ENCODE measurements at regions of chr19 and their contacts with region 1.

Region 1: DNA sequence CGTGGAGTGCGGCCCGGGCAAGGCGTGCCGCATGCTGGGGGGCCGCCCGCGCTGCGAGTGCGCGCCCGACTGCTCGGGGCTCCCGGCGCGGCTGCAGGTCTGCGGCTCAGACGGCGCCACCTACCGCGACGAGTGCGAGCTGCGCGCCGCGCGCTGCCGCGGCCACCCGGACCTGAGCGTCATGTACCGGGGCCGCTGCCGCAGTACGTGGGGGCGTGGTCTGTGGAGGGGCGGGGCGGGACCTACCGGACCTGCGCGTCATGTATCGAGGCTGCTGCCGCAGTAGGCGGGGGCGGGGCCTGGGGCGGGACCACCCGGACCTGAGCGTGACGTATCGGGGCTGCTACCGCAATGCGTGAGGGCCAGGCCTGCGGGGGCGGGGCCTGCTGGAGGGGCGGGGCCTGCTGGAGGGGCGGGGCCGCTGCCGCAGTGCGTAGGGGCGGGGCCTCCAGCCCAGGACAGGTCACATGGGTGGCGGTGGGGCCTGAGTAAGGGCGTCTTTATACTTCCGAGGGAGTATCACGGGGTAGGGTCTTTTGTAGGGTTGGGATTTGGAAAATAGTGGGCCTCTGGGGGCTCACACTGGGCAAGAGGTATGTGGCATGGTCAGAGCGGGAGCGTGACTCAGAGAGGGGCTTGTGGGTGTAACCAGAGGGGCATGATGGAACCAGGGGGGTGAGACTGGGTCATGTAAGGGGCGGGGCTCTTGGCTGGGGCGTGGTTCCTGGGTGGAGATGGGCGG is 4.3 kb downstream of the FSTL3 start:
- DNase-seq: peak; percentile 100
- ATAC-seq: peak; percentile 81
- H3K4me3 Mint-ChIP-seq: peak overlapping the region; percentile 70
- H3K27ac Mint-ChIP-seq: peak overlapping the region; percentile 94
- H3K4me1 Mint-ChIP-seq: peaks cover 3% of the 10 kb centered on the region
- H3K27me3 Mint-ChIP-seq: peaks cover 4% of the 10 kb centered on the region

Region 2: GRCh38 chr19:344625-345319 is 335.7 kb before region 1 on chr19 and contains the start of gene MIER2:
- CTCF ChIA-PET with region 1: no interaction called
- POLR2A ChIA-PET with region 1: no interaction called
- intact Hi-C with region 1: no loop called
- DNase-seq: peak; percentile 94
- ATAC-seq: peak; percentile 94
- H3K4me3 Mint-ChIP-seq: peak within 1 kb of the TSS; percentile 79
- H3K27ac Mint-ChIP-seq: peak within 1 kb of the TSS; percentile 77
- H3K4me1 Mint-ChIP-seq: peaks cover 44% of the 10 kb centered on the region
- H3K27me3 Mint-ChIP-seq: peaks cover 7% of the 10 kb centered on the region
- total RNA-seq, gene MIER2: 21.2 to 24.6 TPM

Region 3: GRCh38 chr19:488505-489417 is 191.7 kb before region 1 on chr19:
- CTCF ChIA-PET with region 1: no interaction called
- POLR2A ChIA-PET with region 1: no interaction called
- intact Hi-C with region 1: no loop called
- DNase-seq: peak; percentile 93
- ATAC-seq: peak; percentile 91
- H3K4me3 Mint-ChIP-seq: peak overlapping the region; percentile 71
- H3K27ac Mint-ChIP-seq: peak overlapping the region; percentile 75
- H3K4me1 Mint-ChIP-seq: peaks cover 2% of the 10 kb centered on the region
- H3K27me3 Mint-ChIP-seq: peaks cover 10% of the 10 kb centered on the region

Region 4: DNA sequence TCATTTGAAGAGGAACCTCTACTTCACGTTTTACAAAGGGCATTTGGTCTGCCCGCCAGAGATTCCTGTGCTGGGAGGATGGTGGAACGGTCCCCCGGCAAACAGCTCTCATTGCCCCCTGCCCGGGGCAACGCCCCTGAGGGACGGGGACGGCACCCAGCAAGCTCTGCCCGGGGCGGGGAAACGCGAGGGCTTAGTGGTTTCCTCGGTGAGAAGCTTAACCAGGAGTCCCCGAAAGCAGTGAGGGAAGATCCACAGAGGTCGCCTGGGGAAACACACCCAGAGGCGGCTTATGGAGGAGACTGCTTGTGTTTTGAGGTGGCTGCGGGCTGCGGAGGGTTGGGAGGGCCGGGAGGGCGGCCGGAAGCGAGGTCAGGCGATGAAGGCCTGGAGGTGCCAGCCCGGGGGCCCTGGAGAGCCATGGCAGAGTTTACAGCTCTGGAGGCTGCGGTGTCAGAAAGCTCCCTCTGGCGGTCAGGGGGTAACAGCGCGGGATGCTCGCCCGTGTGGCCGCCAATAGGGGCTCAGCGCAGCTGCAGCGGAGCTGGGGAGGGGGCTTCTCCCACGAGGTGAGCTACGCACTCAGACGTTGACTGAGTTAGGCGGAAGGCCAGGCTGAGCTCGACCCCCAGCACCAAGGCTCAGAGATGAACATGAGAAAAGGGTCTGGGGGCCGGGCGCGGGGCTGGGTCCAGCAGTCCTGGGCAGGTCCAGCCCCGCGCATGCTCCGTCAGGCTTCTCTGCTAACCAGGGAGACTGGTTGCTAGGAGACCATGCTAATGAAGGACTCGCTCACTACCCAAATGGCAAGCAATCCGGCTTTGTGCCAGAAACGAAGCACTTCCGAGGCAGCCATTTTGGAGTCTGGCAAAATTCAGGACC is 173.8 kb before region 1 on chr19:
- CTCF ChIA-PET with region 1: no interaction called
- POLR2A ChIA-PET with region 1: no interaction called
- intact Hi-C with region 1: loop called in 1 of 2 experiments (anchors 1 kb)
- DNase-seq: peak; percentile 97
- ATAC-seq: peak; percentile 72
- H3K4me3 Mint-ChIP-seq: peak overlapping the region; percentile 95
- H3K27ac Mint-ChIP-seq: peak overlapping the region; percentile 100
- H3K4me1 Mint-ChIP-seq: peaks cover 41% of the 10 kb centered on the region
- H3K27me3 Mint-ChIP-seq: no peaks in the 10 kb centered on the region

Region 5: DNA sequence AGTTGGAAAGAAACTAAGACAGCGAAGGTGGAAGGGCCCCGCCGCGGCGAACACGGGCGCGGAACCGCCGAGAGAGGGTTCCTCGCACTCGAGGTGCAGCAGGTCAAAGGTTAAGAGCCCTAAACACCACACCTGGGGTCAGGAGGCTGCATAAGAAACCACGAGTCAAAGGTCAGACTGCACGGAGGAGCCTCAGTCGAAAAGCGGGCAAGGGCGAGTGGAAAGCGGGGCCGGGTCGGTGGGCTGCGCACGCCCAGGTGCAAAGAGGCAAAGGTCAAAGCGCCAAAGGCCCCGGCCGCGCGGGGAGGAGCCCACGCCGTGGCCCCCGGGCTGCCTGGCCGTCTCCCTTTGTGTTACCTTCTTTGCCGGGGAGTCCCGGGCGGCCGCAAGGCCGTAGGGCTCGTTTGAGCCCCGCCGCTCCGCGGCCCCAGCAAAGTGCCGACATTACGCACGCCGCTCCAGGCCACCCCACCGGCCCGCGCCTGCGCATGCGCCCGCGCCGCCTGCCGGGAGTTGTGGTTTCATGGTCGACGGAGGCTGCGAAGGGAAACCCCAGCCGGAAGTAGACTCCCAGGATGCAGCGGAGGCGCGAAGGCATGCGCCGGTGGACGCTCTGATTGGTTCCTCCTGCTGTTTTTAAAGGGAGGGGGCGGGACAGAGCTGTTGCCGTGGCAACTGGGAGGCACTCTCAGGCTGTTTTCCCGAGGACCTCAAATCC is 47.2 kb before region 1 on chr19 and contains the start of gene POLRMT:
- CTCF ChIA-PET with region 1: interaction called, 3 read pairs
- POLR2A ChIA-PET with region 1: no interaction called
- intact Hi-C with region 1: loop called in 1 of 2 experiments (anchors 1 kb)
- DNase-seq: peak; percentile 98
- ATAC-seq: peak; percentile 98
- H3K4me3 Mint-ChIP-seq: peak within 1 kb of the TSS; percentile 97
- H3K27ac Mint-ChIP-seq: peak within 1 kb of the TSS; percentile 91
- H3K4me1 Mint-ChIP-seq: peaks cover 29% of the 10 kb centered on the region
- H3K27me3 Mint-ChIP-seq: no peaks in the 10 kb centered on the region
- total RNA-seq, gene POLRMT: 69.0 to 77.4 TPM

Region 6: DNA sequence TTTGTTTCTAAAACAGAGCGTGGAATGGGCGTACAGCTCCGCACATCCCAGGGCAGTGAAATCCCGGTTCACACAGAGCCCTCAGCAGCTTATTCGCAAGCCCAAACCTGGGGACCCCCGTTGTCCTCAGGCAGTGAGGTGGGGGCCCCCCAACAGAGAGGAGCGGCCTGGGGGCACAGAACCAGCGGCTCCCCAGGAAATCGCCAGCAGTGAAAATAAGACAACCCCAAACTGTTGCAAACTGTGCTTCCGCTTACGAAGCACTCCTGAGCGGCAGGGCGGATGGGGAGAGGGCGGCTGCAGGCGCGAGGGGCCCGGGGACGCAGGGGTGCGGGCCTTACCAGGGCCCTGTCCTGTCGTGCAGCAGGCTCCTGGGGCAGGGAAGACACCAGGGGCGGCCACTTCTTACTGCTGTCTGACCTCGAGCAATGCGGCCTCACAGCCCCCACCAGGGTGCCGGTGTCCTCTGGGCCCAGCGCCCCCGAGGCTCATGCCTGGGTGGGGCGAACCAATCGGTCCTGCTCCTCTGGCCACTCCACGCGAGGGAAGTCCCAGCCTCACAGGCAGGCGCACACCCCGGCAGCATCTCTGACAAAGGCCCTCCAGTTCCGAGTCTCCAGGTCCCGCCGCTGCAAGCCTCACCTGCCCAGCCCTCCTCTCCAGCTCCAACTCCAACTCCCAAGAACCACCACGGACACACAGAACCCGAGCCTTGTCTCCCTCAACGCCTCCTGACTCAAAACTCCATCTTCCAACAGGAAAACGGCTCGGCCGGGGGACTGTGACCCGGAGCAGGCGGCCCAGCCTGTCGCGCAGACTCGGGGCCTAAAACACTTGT is 34.6 kb before region 1 on chr19:
- CTCF ChIA-PET with region 1: no interaction called
- POLR2A ChIA-PET with region 1: no interaction called
- intact Hi-C with region 1: no loop called
- DNase-seq: no peak
- ATAC-seq: peak; percentile 11
- H3K4me3 Mint-ChIP-seq: no peak overlapping the region
- H3K27ac Mint-ChIP-seq: no peak overlapping the region
- H3K4me1 Mint-ChIP-seq: no peaks in the 10 kb centered on the region
- H3K27me3 Mint-ChIP-seq: no peaks in the 10 kb centered on the region

Region 7: DNA sequence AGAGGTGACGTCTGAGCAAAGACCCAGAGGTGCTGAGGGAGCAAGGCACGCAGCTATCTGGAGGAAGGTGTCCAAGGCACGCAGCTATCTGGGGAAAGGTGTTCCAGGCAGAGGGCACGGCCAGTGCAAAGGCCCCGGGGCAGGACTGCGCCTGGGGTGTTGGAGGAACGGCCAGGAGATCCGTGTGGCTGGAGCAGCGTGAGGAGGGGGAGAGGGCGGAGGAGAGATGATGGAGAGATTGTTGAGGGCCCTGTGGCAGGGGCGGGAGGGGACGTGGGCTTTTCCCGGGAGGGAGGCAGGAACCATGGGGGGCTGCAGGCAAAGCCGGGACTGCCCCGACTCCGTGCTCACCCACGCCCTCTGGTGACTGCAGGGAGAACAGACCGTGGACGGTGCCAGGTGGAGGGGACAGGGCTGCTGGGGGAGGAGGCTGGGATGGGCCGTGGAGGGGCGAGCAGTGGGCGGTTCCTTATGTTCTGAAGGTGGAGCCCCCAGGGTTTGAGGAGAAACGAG is 57.2 kb after region 1 on chr19:
- CTCF ChIA-PET with region 1: interaction called, 3 read pairs
- POLR2A ChIA-PET with region 1: no interaction called
- intact Hi-C with region 1: loop called in 1 of 2 experiments (anchors 1 kb)
- DNase-seq: peak; percentile 76
- ATAC-seq: peak; percentile 79
- H3K4me3 Mint-ChIP-seq: no peak overlapping the region
- H3K27ac Mint-ChIP-seq: no peak overlapping the region
- H3K4me1 Mint-ChIP-seq: no peaks in the 10 kb centered on the region
- H3K27me3 Mint-ChIP-seq: no peaks in the 10 kb centered on the region

Region 8: GRCh38 chr19:778910-779653 is 98.6 kb after region 1 on chr19:
- CTCF ChIA-PET with region 1: no interaction called
- POLR2A ChIA-PET with region 1: no interaction called
- intact Hi-C with region 1: no loop called
- DNase-seq: no peak
- ATAC-seq: no peak
- H3K4me3 Mint-ChIP-seq: no peak overlapping the region
- H3K27ac Mint-ChIP-seq: no peak overlapping the region
- H3K4me1 Mint-ChIP-seq: no peaks in the 10 kb centered on the region
- H3K27me3 Mint-ChIP-seq: peaks cover 2% of the 10 kb centered on the region

Region 9: GRCh38 chr19:925526-926322 is 245.3 kb after region 1 on chr19 and contains the start of gene ARID3A:
- CTCF ChIA-PET with region 1: no interaction called
- POLR2A ChIA-PET with region 1: no interaction called
- intact Hi-C with region 1: loop called in 1 of 2 experiments (anchors 1 kb)
- DNase-seq: peak; percentile 85
- ATAC-seq: peak; percentile 42
- H3K4me3 Mint-ChIP-seq: peak within 1 kb of the TSS; percentile 70
- H3K27ac Mint-ChIP-seq: peak within 1 kb of the TSS; percentile 37
- H3K4me1 Mint-ChIP-seq: peaks cover 17% of the 10 kb centered on the region
- H3K27me3 Mint-ChIP-seq: no peaks in the 10 kb centered on the region
- total RNA-seq, gene ARID3A: 25.1 to 36.0 TPM

Region 10: DNA sequence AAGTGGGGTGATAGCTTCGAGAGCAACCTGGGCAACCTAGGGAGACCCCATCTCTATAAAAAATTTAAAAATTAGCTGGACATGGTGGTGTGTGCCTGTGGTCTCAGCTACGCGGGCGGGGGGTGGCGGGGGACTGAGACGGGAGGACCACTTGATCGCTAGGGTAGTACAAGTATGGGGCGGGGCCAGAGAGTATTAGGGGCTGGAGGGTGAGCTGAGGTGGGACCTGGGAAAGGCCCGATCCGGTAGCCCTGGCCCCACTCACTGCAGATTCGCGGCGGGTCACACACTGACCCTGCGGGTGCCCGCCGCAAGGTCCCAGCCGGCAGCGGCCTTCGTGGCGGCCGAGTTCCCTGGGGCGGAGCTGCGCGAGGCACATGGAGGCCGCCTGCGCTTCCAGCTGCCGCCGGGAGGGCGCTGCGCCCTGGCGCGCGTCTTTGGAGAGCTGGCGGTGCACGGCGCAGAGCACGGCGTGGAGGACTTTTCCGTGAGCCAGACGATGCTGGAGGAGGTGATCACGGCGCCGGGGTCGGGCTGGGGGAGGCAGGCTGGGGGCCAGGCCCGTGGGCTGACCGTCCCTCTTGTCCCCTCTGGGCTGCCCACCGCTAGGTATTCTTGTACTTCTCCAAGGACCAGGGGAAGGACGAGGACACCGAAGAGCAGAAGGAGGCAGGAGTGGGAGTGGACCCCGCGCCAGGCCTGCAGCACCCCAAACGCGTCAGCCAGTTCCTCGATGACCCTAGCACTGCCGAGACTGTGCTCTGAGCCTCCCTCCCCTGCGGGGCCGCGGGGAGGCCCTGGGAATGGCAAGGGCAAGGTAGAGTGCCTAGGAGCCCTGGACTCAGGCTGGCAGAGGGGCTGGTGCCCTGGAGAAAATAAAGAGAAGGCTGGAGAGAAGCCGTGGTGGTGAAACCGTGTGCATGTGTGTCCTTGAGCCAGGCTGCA is 384.5 kb after region 1 on chr19:
- CTCF ChIA-PET with region 1: no interaction called
- POLR2A ChIA-PET with region 1: no interaction called
- intact Hi-C with region 1: loop called in 1 of 2 experiments (anchors 5 kb)
- DNase-seq: peak; percentile 86
- ATAC-seq: peak; percentile 48
- H3K4me3 Mint-ChIP-seq: no peak overlapping the region
- H3K27ac Mint-ChIP-seq: no peak overlapping the region
- H3K4me1 Mint-ChIP-seq: peaks cover 33% of the 10 kb centered on the region
- H3K27me3 Mint-ChIP-seq: no peaks in the 10 kb centered on the region

Region 11: GRCh38 chr19:1652471-1653299 is 972.2 kb after region 1 on chr19 and contains the start of gene TCF3:
- CTCF ChIA-PET with region 1: no interaction called
- POLR2A ChIA-PET with region 1: no interaction called
- intact Hi-C with region 1: loop called in 1 of 2 experiments (anchors 5 kb)
- DNase-seq: peak; percentile 99
- ATAC-seq: peak; percentile 94
- H3K4me3 Mint-ChIP-seq: peak within 1 kb of the TSS; percentile 88
- H3K27ac Mint-ChIP-seq: peak within 1 kb of the TSS; percentile 91
- H3K4me1 Mint-ChIP-seq: peaks cover 32% of the 10 kb centered on the region
- H3K27me3 Mint-ChIP-seq: no peaks in the 10 kb centered on the region
- total RNA-seq, gene TCF3: 115 to 133 TPM